Thyroid gland (tissue), 4 donors: ENCODE measurements at regions of chr1 and their contacts with region 1.

Region 1: GRCh38 chr1:243354511-243355153 is 98.8 kb downstream of the SDCCAG8 start:
- DNase-seq: no peak
- H3K4me3 ChIP-seq: no peak overlapping the region
- H3K27ac ChIP-seq: peak overlapping the region in 2 of 3 donors; percentile 5 to 29
- H3K4me1 ChIP-seq: peaks cover 0 to 12% of the 10 kb centered on the region in 2 donors
- H3K27me3 ChIP-seq: no peaks in the 10 kb centered on the region
- CTCF ChIP-seq: no peak
- POLR2A ChIP-seq: no peak

Region 2: GRCh38 chr1:243325305-243325890 is 29.2 kb before region 1 on chr1:
- intact Hi-C with region 1: no loop called
- DNase-seq: no peak
- H3K4me3 ChIP-seq: no peak overlapping the region
- H3K27ac ChIP-seq: peak overlapping the region in 1 of 3 donors; percentile 11
- H3K4me1 ChIP-seq: peaks cover 0 to 5% of the 10 kb centered on the region in 2 donors
- H3K27me3 ChIP-seq: no peaks in the 10 kb centered on the region
- CTCF ChIP-seq: peak; percentile 56 to 89 (median 72)
- POLR2A ChIP-seq: no peak

Region 3: GRCh38 chr1:243433737-243434370 is 79.2 kb after region 1 on chr1:
- intact Hi-C with region 1: no loop called
- DNase-seq: no peak
- H3K4me3 ChIP-seq: no peak overlapping the region
- H3K27ac ChIP-seq: no peak overlapping the region
- H3K4me1 ChIP-seq: no peaks in the 10 kb centered on the region
- H3K27me3 ChIP-seq: no peaks in the 10 kb centered on the region
- CTCF ChIP-seq: no peak
- POLR2A ChIP-seq: no peak

Region 4: DNA sequence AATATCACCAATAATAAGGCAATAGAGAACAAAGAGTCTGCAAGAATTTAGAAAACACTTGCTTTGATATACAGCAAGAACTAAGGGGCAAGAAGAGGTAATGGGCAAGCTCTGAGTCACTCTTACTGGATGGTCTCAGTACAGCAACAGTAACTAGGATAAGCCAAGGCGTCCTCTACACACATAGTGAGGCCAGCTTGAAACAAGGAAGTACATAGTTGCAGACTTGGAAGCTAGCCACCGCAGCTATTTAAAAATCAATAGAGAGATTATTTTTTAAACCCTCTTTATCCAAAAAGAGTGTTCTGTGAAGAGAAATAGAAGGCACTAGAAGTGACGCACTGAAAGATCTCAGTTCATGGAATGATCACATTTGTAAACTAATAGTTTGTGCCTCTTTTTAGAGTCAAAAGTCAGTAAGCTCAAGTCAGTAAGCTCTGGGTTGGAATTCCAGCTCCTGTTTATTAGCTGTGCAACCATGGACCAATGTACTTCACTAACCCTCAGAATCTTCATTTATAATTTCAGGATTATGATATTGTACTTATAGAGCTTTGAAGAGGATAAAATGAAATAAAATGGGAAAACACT is 376.8 kb after region 1 on chr1:
- intact Hi-C with region 1: loop called (anchors 10 kb)
- DNase-seq: no peak
- H3K4me3 ChIP-seq: no peak overlapping the region
- H3K27ac ChIP-seq: no peak overlapping the region
- H3K4me1 ChIP-seq: peaks cover 5 to 8% of the 10 kb centered on the region in 2 donors
- H3K27me3 ChIP-seq: no peaks in the 10 kb centered on the region
- CTCF ChIP-seq: no peak
- POLR2A ChIP-seq: no peak